Aorta (tissue), 5 donors: ENCODE measurements at regions of chr1 and their contacts with region 1.

Region 1: DNA sequence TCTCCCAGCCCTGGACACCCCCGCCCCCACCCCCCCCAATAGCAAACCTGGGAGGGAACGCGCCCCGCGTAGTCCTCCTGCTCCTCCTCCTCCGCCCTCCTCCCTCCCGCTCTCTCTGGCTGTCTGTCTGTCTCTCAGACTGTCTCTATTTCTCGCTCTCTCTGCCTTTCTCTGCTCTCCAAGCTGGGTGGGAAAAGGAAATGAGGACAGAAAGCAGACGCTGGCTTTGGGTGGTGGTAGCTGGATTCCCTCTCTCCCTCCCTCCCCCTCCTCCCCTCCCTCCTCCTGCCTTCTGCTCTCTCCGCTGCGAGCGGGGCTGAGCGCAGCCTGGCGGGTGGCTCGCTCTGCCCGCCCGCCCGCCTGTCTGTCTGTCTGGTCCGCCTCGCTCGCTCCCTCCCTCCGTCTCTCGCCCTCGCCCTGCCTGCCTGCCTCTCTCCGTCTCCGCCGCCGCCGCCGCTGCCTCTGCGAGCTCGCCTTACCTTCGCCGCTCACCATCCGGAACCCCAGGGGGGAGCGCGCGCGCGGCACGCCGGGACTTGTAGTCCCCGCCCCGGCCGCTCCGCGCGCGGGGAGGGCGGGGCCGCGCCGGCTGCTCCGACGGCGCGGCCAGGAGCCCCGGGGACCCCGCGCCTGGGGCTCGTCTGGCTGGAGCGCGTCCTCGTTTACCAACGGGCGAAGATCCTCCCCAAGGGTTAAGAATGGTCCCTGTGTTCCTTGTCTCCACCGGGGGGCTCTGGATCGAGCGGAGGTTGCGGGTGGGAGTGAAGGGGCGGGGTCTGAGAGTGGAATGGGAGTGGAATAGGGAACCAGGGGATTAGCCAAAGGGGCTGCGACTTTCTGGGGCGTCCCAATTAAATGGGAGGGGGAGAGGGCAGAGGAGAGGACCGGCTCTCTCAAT is at the start of gene AHDC1:
- DNase-seq: peak; percentile 95 to 97
- ATAC-seq: peak; percentile 78
- H3K4me3 ChIP-seq: peak within 1 kb of the TSS; percentile 89 to 90
- H3K27ac ChIP-seq: peak within 1 kb of the TSS; percentile 44 to 89
- H3K4me1 ChIP-seq: no peaks in the 10 kb centered on the region
- H3K27me3 ChIP-seq: no peaks in the 10 kb centered on the region
- total RNA-seq, gene AHDC1: 63.5 to 89.1 TPM

Region 2: GRCh38 chr1:27300341-27301051 is 303.4 kb before region 1 on chr1:
- intact Hi-C with region 1: loop called in 1 of 2 experiments (anchors 5 kb)
- DNase-seq: peak; percentile 88 to 91
- ATAC-seq: peak; percentile 93
- H3K4me3 ChIP-seq: no peak overlapping the region
- H3K27ac ChIP-seq: no peak overlapping the region
- H3K4me1 ChIP-seq: no peaks in the 10 kb centered on the region
- H3K27me3 ChIP-seq: no peaks in the 10 kb centered on the region

Region 3: DNA sequence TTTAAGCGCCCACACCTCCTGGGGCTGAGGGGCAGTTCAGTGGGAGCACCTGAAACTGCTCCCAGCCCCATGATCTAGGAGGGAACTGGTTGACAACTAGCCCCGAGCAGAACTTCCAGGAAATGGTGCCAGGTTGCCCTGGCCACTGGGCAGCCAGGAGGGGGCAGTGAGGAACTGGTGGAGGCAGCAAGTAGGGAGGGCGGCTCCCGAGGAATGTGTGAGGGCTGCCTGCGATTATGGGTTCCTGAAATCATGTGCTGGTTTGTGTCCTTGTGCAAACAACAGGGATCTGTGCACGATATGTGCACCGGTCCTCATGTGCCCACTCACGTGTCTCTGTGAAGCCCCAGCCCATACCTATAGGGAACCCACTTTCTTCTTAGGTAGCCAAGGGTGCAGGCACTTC is 201.6 kb before region 1 on chr1:
- intact Hi-C with region 1: loop called (anchors 1 to 2 kb)
- DNase-seq: peak; percentile 87 to 92
- ATAC-seq: peak; percentile 74
- H3K4me3 ChIP-seq: no peak overlapping the region
- H3K27ac ChIP-seq: peak overlapping the region; percentile 49 to 71
- H3K4me1 ChIP-seq: no peaks in the 10 kb centered on the region
- H3K27me3 ChIP-seq: no peaks in the 10 kb centered on the region

Region 4: GRCh38 chr1:27489910-27490741 is 113.8 kb before region 1 on chr1 and contains the start of gene WASF2:
- intact Hi-C with region 1: loop called (anchors 2 to 10 kb)
- DNase-seq: peak; percentile 98
- ATAC-seq: peak; percentile 97
- H3K4me3 ChIP-seq: peak within 1 kb of the TSS; percentile 79 to 97
- H3K27ac ChIP-seq: peak within 1 kb of the TSS; percentile 9 to 87
- H3K4me1 ChIP-seq: no peaks in the 10 kb centered on the region
- H3K27me3 ChIP-seq: no peaks in the 10 kb centered on the region
- total RNA-seq, gene WASF2: 155 to 164 TPM

Region 5: GRCh38 chr1:27568300-27569087 is 35.4 kb before region 1 on chr1:
- intact Hi-C with region 1: loop called in 1 of 2 experiments (anchors 2 kb)
- DNase-seq: peak; percentile 96 to 98
- ATAC-seq: peak; percentile 87
- H3K4me3 ChIP-seq: no peak overlapping the region
- H3K27ac ChIP-seq: peak overlapping the region; percentile 70 to 88
- H3K4me1 ChIP-seq: peaks cover 0 to 3% of the 10 kb centered on the region in 2 donors
- H3K27me3 ChIP-seq: no peaks in the 10 kb centered on the region

Region 6: DNA sequence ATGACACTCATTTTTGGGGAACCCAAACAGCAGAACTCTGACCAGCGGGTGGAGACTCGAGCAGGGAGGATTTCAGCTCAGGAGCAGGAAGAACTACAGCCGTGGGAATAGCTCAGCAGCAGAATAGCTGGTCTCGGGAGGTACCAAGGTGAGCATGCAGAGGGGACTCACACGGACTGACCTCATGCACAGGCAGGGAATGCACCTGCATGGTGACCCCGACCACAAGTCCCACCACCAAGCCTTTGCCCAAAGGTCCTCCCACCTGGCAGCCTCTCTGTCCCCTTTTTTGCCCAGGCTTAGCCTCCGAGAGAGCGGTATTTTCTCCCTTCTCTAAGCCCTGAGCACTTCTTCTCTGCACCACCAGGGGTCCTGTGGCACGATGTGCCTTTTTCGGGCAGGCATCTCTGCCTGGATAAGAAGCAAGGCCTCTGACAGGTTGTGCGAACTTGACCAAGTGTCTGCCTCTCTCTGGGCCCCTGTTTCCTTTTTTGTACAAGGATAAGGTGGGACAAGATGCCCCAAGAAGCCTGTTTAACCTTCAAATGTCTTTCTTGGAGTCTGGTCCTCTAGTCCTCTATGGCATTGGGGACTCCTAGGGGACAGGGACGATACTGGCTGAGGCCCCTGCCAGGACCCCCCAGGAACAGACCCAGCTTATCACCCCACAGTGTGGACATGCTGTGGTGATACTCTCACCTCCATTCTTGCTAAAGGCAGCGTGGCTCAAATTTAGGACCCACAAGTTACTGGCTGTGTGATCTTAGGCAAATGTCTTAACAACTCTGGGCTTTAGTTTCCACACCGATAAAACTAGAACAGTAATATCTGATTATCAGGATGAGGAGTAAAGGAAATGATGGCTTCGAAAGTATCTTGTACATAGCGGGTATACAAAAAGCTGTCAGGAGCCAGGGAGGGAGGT is 40.0 kb after region 1 on chr1:
- intact Hi-C with region 1: loop called in 1 of 2 experiments (anchors 5 kb)
- DNase-seq: peak; percentile 73 to 84
- ATAC-seq: peak; percentile 78
- H3K4me3 ChIP-seq: no peak overlapping the region
- H3K27ac ChIP-seq: no peak overlapping the region
- H3K4me1 ChIP-seq: no peaks in the 10 kb centered on the region
- H3K27me3 ChIP-seq: no peaks in the 10 kb centered on the region